SK-N-SH (cell line): ENCODE measurements at regions of chr7 and their contacts with region 1.

Region 1: DNA sequence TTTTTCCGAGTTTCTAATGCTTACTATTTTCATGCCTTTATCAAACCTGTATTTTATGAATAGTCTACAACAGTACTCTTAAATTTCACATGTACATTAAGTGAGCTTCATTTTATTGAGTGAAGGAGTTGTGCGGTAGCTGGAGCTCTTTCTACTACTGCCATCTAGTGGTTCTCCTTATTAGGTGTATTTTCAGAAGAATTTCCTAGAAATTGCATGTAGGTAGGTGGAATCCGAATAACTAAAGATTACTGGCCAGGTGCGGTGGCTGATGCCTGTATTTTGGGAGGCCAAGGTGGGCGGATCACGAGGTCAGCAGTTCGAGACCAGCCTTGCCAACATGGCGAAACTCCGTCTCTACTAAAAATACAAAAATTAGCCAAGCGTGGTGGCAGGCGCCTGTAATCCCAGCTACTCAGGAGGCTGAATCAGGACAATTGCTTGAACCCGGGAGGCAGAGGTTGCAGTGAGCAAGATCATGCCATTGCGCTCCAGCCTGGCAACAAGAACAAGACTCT is 38.3 kb downstream of the LRRC72 start:
- DNase-seq: peak; percentile 61
- H3K4me3 ChIP-seq: no peak overlapping the region
- H3K27ac ChIP-seq: no peak overlapping the region
- H3K4me1 ChIP-seq: peaks cover 4 to 16% of the 10 kb centered on the region in 2 experiments; a peak in 2 of 4 replicates
- H3K27me3 ChIP-seq: peaks cover 16% of the 10 kb centered on the region; the same call in 1 of the 2 replicates
- CTCF ChIP-seq: peak; percentile 99
- EP300 ChIP-seq: no peak
- RAD21 ChIP-seq: peak; percentile 98

Region 2: GRCh38 chr7:16066805-16067459 is 498.0 kb before region 1 on chr7:
- CTCF ChIA-PET with region 1: interaction called, 10 read pairs
- POLR2A ChIA-PET with region 1: no interaction called
- DNase-seq: no peak
- H3K4me3 ChIP-seq: no peak overlapping the region
- H3K27ac ChIP-seq: no peak overlapping the region
- H3K4me1 ChIP-seq: peaks cover 0 to 10% of the 10 kb centered on the region in 2 experiments; a peak in 2 of 4 replicates
- H3K27me3 ChIP-seq: peaks cover 17% of the 10 kb centered on the region; the same call in 1 of the 2 replicates
- CTCF ChIP-seq: no peak
- EP300 ChIP-seq: no peak
- RAD21 ChIP-seq: no peak

Region 3: GRCh38 chr7:16083931-16084330 is 481.0 kb before region 1 on chr7:
- CTCF ChIA-PET with region 1: interaction called, 93 read pairs
- POLR2A ChIA-PET with region 1: no interaction called
- DNase-seq: no peak
- H3K4me3 ChIP-seq: no peak overlapping the region
- H3K27ac ChIP-seq: peak overlapping the region in 1 of 2 experiments; percentile 71; a peak in 1 of 4 replicates
- H3K4me1 ChIP-seq: peaks cover 12 to 13% of the 10 kb centered on the region in 2 experiments; a peak in 3 of 4 replicates
- H3K27me3 ChIP-seq: no peaks in the 10 kb centered on the region
- CTCF ChIP-seq: no peak
- EP300 ChIP-seq: no peak
- RAD21 ChIP-seq: no peak

Region 4: DNA sequence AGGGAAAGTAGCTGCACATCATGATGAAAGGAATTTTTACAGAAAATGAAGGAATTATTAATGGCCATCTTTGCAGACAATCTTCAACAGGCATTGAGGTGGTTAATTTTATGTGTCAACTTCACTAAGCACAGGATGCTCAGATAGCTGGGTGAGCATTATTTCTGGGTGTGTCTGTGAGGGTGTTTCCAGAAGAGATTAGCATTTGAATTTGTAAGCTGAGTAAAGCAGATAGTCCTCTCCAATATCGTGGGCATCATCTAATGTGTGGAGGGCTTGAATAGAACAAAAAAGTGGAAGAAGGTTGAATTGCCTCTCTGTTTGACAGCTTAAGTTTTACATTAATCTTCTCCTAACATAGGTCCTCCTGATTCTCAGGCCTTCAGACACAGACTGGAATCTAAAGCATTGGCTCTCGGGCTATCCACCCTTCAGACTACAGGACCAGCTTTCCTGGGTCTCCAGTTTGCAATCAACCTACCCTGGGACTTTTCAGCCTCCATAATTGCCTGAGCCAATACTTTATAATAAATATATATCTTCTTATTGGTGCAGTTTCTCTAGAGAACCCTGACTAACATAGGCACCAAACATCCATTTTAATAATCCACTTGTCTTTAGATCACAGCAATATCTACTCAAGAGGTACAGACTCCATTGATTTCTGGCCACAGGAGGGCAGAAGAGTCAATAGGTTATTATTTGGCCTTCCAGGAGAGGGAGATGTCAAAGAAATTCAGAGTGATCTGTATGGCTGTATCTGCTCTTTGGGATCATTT is 133.1 kb before region 1 on chr7:
- CTCF ChIA-PET with region 1: interaction called, 51 read pairs
- POLR2A ChIA-PET with region 1: no interaction called
- DNase-seq: peak; percentile 34
- H3K4me3 ChIP-seq: no peak overlapping the region
- H3K27ac ChIP-seq: no peak overlapping the region
- H3K4me1 ChIP-seq: no peaks in the 10 kb centered on the region; a peak in 2 of 4 replicates
- H3K27me3 ChIP-seq: no peaks in the 10 kb centered on the region
- CTCF ChIP-seq: peak; percentile 67
- EP300 ChIP-seq: no peak
- RAD21 ChIP-seq: peak; percentile 81

Region 5: DNA sequence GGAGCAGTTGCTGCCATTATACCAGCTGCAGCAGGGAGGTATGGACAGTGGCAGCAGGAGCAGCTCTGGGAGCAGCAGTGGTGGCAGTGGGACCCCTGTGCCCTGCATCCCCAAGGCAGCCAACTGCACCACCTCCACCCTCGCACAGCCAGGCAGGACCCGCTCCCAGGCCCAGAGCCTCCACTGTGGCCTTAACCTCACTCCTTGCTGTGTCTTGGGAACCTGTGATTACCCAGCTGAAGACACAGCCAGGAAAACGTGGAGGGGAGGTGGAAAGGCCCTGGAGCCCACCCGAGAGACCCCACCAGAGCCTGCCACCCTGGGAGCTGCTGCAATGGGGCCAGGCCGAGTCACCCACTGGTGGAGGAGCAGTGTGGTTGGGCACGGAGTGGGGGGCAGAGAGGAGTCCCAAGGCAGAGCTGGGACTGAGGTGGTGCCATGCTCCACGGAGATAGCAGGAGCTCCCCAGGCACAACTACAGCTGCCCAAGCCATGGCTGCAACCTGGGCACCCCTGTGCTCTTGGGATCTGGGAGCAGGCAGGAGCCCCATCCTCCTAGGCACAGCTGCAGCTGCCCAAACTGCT is 18.0 kb before region 1 on chr7:
- CTCF ChIA-PET with region 1: interaction called, 45 read pairs
- POLR2A ChIA-PET with region 1: no interaction called
- DNase-seq: no peak
- H3K4me3 ChIP-seq: no peak overlapping the region
- H3K27ac ChIP-seq: no peak overlapping the region
- H3K4me1 ChIP-seq: no peaks in the 10 kb centered on the region
- H3K27me3 ChIP-seq: peaks cover 29% of the 10 kb centered on the region; the same call in 1 of the 2 replicates
- CTCF ChIP-seq: no peak
- EP300 ChIP-seq: no peak
- RAD21 ChIP-seq: no peak

Region 6: DNA sequence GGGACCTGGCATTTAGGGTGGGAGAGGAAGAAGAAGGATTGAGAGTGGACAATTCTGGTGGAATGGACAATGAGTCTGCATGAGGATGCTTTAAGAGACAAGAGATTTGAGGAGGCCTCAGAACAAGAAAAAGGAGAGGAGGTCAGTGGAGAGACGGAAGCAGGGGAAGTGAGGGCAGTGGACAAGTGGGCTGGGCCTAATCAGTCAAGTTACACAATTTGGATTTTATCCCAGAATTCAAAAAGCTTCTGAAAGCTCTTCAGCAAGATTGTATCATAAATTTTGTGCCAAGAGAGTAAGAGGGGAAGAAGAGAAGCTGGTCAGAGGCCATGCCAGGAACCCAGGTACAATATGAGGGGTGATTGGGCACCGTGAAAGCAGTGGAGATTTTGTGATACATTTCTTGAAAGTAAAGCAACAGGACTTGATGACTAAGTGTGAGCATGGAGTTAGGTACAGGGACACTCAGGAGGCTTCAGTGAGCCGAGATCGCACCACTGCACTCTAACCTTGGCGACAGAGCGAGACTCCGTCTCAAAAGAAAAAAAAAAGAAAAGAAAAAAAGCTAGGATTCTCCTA is 169.3 kb after region 1 on chr7:
- CTCF ChIA-PET with region 1: no interaction called
- POLR2A ChIA-PET with region 1: no interaction called
- DNase-seq: no peak
- H3K4me3 ChIP-seq: no peak overlapping the region
- H3K27ac ChIP-seq: no peak overlapping the region
- H3K4me1 ChIP-seq: no peaks in the 10 kb centered on the region
- H3K27me3 ChIP-seq: no peaks in the 10 kb centered on the region
- CTCF ChIP-seq: no peak
- EP300 ChIP-seq: no peak
- RAD21 ChIP-seq: no peak

Region 7: DNA sequence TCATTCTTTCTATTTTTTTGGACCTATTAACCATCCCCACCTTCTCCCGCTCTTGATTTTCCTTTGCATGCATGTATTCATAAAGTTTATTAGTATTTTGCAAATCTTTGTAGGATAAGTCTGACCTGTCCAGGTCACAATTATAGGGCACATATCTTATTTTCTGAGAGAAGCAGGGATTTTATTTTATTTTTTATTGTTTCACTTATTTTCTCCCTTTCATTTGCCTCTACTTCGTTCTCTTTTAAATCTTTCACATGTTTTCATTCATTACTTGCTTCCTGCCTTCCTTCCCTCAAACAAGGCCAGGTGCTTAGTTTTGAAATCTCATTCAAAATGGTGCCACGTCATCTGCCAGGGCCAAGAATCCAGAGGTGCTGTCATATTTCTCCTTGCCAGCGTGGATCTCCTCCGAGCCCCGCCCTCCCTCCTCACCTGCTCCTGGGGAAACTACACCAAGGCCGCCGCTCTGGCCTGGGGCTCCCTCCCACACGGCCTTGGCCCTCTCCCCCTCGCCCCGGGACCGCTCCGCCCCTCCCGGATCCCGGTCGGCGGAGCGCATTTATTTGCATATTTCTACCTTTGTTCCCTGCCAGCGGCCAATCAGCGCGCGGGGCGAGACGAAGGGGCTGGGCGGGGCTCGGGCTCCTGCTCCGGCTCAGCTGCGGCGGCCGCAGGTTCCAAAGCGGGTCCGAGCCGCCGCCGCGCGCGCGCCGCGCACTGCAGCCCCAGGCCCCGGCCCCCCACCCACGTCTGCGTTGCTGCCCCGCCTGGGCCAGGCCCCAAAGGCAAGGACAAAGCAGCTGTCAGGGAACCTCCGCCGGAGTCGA is 188.3 kb after region 1 on chr7 and contains the start of gene TSPAN13:
- CTCF ChIA-PET with region 1: no interaction called
- POLR2A ChIA-PET with region 1: no interaction called
- DNase-seq: peak; percentile 93
- H3K4me3 ChIP-seq: peak within 1 kb of the TSS; percentile 68 to 71
- H3K27ac ChIP-seq: no peak within 1 kb of the TSS; a peak in 1 of 4 replicates
- H3K4me1 ChIP-seq: peaks cover 0 to 14% of the 10 kb centered on the region in 2 experiments; a peak in 2 of 4 replicates
- H3K27me3 ChIP-seq: no peaks in the 10 kb centered on the region
- CTCF ChIP-seq: no peak
- EP300 ChIP-seq: no peak
- RAD21 ChIP-seq: no peak
- polyA plus RNA-seq, gene TSPAN13: 0.26 and 0.42 TPM in 2 replicates

Region 8: GRCh38 chr7:16791895-16792294 is 226.9 kb after region 1 on chr7:
- CTCF ChIA-PET with region 1: no interaction called
- POLR2A ChIA-PET with region 1: no interaction called
- DNase-seq: no peak
- H3K4me3 ChIP-seq: no peak overlapping the region
- H3K27ac ChIP-seq: no peak overlapping the region
- H3K4me1 ChIP-seq: peaks cover 0 to 14% of the 10 kb centered on the region in 2 experiments; a peak in 2 of 4 replicates
- H3K27me3 ChIP-seq: peaks cover 4% of the 10 kb centered on the region; the same call in 1 of the 2 replicates
- CTCF ChIP-seq: no peak
- EP300 ChIP-seq: no peak
- RAD21 ChIP-seq: no peak